CD4-positive, alpha-beta T cell (primary cell): ENCODE measurements at regions of chr2 and their contacts with region 1.

Region 1: DNA sequence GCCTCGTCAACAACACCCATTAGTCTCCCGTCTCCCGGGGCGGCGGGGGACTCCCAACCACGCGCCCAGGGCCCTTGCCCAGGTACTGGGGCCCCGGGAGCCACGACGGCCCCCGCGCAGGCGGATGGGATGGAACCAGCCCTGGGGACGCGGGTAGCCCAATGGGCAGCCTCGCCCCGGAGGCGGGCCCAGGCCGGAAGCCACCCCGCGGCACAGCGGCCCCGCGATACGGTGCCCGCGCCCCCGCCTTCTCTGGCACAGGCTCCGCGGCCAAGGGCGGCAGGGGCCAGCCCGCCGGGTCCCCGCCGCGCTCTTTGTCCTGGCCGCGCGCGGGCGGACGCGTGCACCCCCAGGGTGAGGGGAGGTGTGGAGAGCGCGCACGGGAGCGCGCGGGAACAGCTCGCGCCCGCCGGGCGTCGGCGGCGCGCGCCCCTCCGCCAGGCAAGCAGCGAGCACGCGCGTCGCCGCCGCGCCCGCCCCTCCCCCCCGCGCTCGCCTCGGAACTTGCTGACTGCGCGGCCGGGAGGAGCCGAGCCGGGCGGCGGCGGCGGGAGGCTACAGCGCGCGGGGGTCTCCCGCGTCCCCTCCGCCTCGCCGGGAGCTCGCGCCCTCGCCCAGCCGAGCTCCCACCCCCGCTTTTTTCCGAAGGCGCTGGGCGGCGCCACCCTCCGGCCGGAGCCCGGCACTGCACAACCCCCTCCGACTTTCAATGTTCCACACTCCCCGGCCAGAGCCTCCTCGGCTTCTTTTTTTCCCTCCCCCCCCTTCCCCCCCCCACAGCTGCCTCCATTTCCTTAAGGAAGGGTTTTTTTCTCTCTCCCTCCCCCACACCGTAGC is at the start of gene UBE2E3:
- DNase-seq: peak; percentile 62 to 90 (median 70)
- ATAC-seq: peak; percentile 77
- H3K4me3 ChIP-seq: peak within 1 kb of the TSS; percentile 77
- H3K4me3 Mint-ChIP-seq: peak within 1 kb of the TSS; percentile 94
- H3K27ac ChIP-seq: peak within 1 kb of the TSS in 1 of 2 donors; percentile 20
- H3K27ac Mint-ChIP-seq: peak within 1 kb of the TSS; percentile 92
- H3K4me1 ChIP-seq: peaks cover 17% of the 10 kb centered on the region
- H3K4me1 Mint-ChIP-seq: peaks cover 49% of the 10 kb centered on the region
- H3K27me3 ChIP-seq: no peaks in the 10 kb centered on the region
- H3K27me3 Mint-ChIP-seq: no peaks in the 10 kb centered on the region
- CTCF ChIP-seq: peak; percentile 39
- total RNA-seq, gene UBE2E3: 20.5 TPM

Region 2: DNA sequence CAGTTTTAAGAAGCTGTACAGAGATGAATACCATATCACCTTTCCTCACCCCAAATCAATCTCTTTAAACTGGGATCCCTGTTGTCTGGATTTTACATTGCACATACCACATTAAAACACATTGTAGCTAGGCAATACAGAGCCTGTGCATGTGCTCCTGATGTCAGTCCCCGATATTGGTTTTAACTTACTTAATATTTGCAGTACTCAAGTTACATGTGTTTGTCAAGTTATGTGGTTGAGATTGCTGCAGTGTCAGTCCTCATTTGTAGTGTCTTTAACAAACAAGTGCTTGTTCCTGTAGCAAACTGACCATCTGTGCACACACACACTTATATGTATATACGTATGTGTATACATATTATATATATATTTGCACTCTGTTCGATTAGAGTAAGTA is 10.3 kb before region 1 on chr2:
- CTCF ChIA-PET with region 1: interaction called, 3 read pairs
- POLR2A ChIA-PET with region 1: interaction called, 30 read pairs
- intact Hi-C with region 1: no loop called
- DNase-seq: no peak
- ATAC-seq: no peak
- H3K4me3 ChIP-seq: no peak overlapping the region
- H3K4me3 Mint-ChIP-seq: no peak overlapping the region
- H3K27ac ChIP-seq: no peak overlapping the region
- H3K27ac Mint-ChIP-seq: no peak overlapping the region
- H3K4me1 ChIP-seq: no peaks in the 10 kb centered on the region
- H3K4me1 Mint-ChIP-seq: no peaks in the 10 kb centered on the region
- H3K27me3 ChIP-seq: peaks cover 0 to 3% of the 10 kb centered on the region in 2 experiments
- H3K27me3 Mint-ChIP-seq: peaks cover 16% of the 10 kb centered on the region
- CTCF ChIP-seq: no peak

Region 3: DNA sequence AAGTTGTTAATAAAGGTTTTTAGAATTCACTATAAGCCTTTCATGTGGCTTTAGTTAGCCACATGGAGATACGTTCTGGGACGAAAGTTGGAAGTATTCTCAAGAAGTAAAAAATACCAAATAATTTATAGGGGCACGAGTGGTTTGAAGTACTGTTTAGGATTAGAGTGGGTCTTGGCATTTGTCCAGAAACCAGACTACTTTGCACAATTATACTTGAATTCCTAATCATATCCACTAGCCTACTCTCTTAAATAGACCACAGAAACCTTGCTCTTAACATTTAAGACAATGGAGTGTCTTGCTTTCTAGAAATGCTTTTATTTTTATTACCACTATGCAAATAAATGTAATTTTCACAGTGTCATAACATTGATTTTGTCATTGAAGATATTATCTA is 44.7 kb after region 1 on chr2:
- CTCF ChIA-PET with region 1: no interaction called
- POLR2A ChIA-PET with region 1: no interaction called
- intact Hi-C with region 1: no loop called
- DNase-seq: no peak
- ATAC-seq: no peak
- H3K4me3 ChIP-seq: no peak overlapping the region
- H3K4me3 Mint-ChIP-seq: no peak overlapping the region
- H3K27ac ChIP-seq: no peak overlapping the region
- H3K27ac Mint-ChIP-seq: no peak overlapping the region
- H3K4me1 ChIP-seq: no peaks in the 10 kb centered on the region
- H3K4me1 Mint-ChIP-seq: peaks cover 44% of the 10 kb centered on the region
- H3K27me3 ChIP-seq: no peaks in the 10 kb centered on the region
- H3K27me3 Mint-ChIP-seq: no peaks in the 10 kb centered on the region
- CTCF ChIP-seq: no peak

Region 4: GRCh38 chr2:181058378-181059269 is 78.3 kb after region 1 on chr2:
- CTCF ChIA-PET with region 1: interaction called, 11 read pairs
- POLR2A ChIA-PET with region 1: interaction called, 5 read pairs
- intact Hi-C with region 1: loop called (anchors 5 to 10 kb)
- DNase-seq: peak in 11 of 14 experiments; percentile 3 to 74 (median 26)
- ATAC-seq: no peak
- H3K4me3 ChIP-seq: no peak overlapping the region
- H3K4me3 Mint-ChIP-seq: no peak overlapping the region
- H3K27ac ChIP-seq: no peak overlapping the region
- H3K27ac Mint-ChIP-seq: no peak overlapping the region
- H3K4me1 ChIP-seq: no peaks in the 10 kb centered on the region
- H3K4me1 Mint-ChIP-seq: peaks cover 9% of the 10 kb centered on the region
- H3K27me3 ChIP-seq: no peaks in the 10 kb centered on the region
- H3K27me3 Mint-ChIP-seq: no peaks in the 10 kb centered on the region
- CTCF ChIP-seq: peak; percentile 92

Region 5: DNA sequence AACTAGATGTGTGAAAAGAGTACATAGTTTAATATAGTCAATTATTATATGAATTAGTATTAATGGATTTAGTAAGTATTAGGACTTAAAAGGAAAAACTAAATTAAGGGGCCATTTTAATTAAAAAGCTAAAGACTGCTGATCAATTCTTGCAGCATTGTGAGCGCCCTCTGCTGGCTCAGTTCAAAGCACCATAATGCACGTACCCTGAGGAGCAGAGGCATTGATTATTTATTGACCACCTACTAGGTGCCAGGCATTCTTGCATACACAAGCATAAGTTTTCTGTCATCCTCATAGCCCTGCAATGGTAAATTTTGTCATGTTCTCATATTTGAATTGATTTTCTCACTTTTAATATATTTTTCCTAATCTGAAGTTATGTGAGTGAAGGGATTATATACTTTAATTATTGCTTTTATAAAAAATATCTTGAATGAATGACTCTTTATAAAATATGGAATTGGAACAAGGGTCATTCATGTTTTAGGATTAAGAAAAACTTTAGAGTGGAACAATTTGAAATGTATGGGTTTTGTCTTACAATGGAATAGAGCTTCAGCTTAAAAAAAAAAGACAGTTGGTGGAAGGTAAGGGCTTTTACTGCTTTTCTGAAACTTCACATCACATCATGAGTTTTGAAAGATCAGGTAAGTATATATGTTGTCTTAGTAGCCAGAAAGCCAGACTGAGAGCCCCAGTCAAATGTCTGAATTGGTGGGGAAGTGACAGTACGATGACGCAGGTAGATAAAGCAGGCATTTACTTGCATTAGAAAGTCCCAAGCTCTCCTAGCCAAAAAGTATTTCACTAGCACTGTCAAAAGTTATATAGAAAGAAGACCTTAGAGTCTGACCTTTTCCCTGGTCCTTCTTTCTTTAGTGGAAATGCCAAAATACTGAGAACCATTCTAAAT is 486.6 kb after region 1 on chr2:
- CTCF ChIA-PET with region 1: no interaction called
- POLR2A ChIA-PET with region 1: interaction called, 4 read pairs
- intact Hi-C with region 1: loop called in 1 of 2 experiments (anchors 10 kb)
- DNase-seq: peak; percentile 63 to 89 (median 74)
- ATAC-seq: peak; percentile 65
- H3K4me3 ChIP-seq: no peak overlapping the region
- H3K4me3 Mint-ChIP-seq: peak overlapping the region; percentile 69
- H3K27ac ChIP-seq: peak overlapping the region; percentile 23 to 35
- H3K27ac Mint-ChIP-seq: peak overlapping the region; percentile 84
- H3K4me1 ChIP-seq: peaks cover 33% of the 10 kb centered on the region
- H3K4me1 Mint-ChIP-seq: peaks cover 89% of the 10 kb centered on the region
- H3K27me3 ChIP-seq: no peaks in the 10 kb centered on the region
- H3K27me3 Mint-ChIP-seq: no peaks in the 10 kb centered on the region
- CTCF ChIP-seq: peak; percentile 94

Region 6: DNA sequence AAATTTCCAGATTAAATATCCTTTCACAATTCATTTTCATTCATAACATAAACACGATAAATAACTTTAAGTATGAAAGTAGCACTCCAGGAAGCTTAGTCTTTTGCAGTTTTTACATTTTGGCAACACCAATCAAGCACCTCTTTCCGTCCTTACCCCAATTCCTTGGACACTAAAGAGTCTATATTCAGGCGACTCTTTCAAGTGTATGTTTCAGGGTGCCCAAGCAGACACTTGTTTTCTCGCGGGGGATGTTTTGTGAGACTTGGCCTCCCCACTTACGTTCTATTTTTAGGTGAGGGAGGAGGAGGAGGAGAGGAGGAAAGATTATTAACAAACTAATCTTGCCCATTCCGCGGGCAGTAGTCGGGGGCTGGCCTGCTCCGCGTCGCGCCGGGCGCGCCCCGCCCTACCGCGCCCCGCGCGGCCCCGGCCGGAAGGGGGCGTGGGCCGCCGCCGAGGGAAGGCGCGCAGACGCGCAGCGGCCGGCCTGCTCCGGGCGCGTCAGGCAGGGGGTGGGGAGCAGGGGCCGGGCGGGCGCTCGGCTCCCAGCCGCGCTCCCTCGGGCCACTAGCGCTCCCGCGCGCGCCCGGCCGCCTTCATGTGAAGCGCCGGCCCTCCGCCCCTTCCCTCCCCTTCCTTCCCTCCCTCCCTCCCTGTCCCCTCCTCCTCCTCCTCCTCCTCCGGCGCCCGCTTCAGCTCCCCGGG is 911.1 kb after region 1 on chr2 and contains the start of gene ITPRID2:
- CTCF ChIA-PET with region 1: no interaction called
- POLR2A ChIA-PET with region 1: interaction called, 21 read pairs
- intact Hi-C with region 1: loop called in 1 of 2 experiments (anchors 5 kb)
- DNase-seq: peak; percentile 12 to 86 (median 52)
- ATAC-seq: peak; percentile 90
- H3K4me3 ChIP-seq: peak within 1 kb of the TSS; percentile 75
- H3K4me3 Mint-ChIP-seq: peak within 1 kb of the TSS; percentile 97
- H3K27ac ChIP-seq: peak within 1 kb of the TSS in 1 of 2 donors; percentile 36
- H3K27ac Mint-ChIP-seq: peak within 1 kb of the TSS; percentile 77
- H3K4me1 ChIP-seq: peaks cover 8% of the 10 kb centered on the region
- H3K4me1 Mint-ChIP-seq: peaks cover 37% of the 10 kb centered on the region
- H3K27me3 ChIP-seq: peaks cover 4 to 15% of the 10 kb centered on the region in 2 experiments
- H3K27me3 Mint-ChIP-seq: peaks cover 25% of the 10 kb centered on the region
- CTCF ChIP-seq: no peak
- total RNA-seq, gene ITPRID2: 75.8 to 79.7 TPM